MCF 10A (cell line): ENCODE measurements at regions of chr22 and their contacts with region 1.

Region 1: GRCh38 chr22:34950489-34950888 is 115.5 kb upstream of the ISX start:
- DNase-seq: no peak
- H3K4me3 Mint-ChIP-seq: no peak overlapping the region
- H3K27ac Mint-ChIP-seq: no peak overlapping the region
- H3K4me1 Mint-ChIP-seq: no peaks in the 10 kb centered on the region
- H3K27me3 Mint-ChIP-seq: no peaks in the 10 kb centered on the region
- CTCF ChIP-seq: no peak

Region 2: GRCh38 chr22:34475886-34476285 is 474.6 kb before region 1 on chr22:
- CTCF ChIA-PET with region 1: no interaction called
- POLR2A ChIA-PET with region 1: no interaction called
- intact Hi-C with region 1: no loop called
- DNase-seq: no peak
- H3K4me3 Mint-ChIP-seq: no peak overlapping the region
- H3K27ac Mint-ChIP-seq: no peak overlapping the region
- H3K4me1 Mint-ChIP-seq: no peaks in the 10 kb centered on the region
- H3K27me3 Mint-ChIP-seq: no peaks in the 10 kb centered on the region
- CTCF ChIP-seq: no peak

Region 3: DNA sequence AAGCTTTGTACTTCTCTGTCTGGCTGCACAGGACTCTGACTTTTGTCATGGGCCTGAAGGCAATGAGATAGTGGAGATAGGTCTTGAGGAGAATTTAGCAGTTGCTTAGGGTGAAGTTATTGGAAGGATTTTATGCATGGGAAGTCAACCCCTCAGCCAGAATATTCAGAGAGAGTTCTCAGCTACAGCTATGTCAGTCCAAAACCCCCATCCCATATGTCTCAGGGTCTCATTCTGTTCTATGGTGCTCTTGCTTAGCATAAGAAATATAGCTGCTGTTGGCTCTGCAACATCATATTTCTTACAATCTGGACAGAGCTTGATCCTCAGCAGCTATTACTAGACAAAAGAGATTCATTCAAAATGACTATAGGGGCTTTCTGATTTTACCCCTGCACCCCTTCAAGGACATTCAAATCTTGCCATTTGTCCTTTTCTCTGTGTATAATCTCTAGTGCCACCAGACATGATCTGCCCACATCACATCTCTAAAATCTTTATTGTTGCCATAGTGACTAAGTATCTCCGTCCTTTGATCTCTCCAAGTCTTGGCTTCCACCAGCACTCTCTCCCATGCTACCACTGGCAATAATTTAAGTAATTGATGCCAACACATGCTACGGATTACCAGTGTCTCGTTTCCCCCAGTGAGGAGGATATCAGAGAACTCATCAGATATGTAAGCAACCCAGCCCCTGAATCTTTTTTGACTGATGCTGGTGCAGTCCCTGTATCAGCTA is 211.7 kb before region 1 on chr22:
- CTCF ChIA-PET with region 1: no interaction called
- POLR2A ChIA-PET with region 1: no interaction called
- intact Hi-C with region 1: no loop called
- DNase-seq: no peak
- H3K4me3 Mint-ChIP-seq: no peak overlapping the region
- H3K27ac Mint-ChIP-seq: no peak overlapping the region
- H3K4me1 Mint-ChIP-seq: no peaks in the 10 kb centered on the region
- H3K27me3 Mint-ChIP-seq: no peaks in the 10 kb centered on the region
- CTCF ChIP-seq: no peak

Region 4: DNA sequence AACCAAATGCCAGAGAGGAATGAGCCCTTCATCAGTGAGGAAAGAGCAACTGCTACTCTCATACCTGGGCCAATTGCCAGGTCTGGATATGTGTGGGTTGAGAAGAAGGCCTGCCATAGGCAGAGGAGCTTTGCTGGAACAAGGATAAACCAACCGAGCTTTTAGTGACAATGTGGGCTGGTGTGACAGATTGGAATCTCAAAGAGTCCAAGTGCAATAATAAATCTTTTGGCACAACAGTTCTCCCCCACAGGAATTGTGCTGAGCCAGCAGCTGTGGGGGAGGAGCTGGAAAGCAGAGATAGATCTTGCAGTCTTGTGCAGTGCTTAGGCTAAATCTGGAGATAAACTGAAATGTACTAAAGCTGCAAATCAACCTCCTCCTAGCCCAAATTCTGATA is 36.0 kb after region 1 on chr22:
- CTCF ChIA-PET with region 1: no interaction called
- POLR2A ChIA-PET with region 1: no interaction called
- intact Hi-C with region 1: loop called (anchors 2 kb)
- DNase-seq: no peak
- H3K4me3 Mint-ChIP-seq: no peak overlapping the region
- H3K27ac Mint-ChIP-seq: no peak overlapping the region
- H3K4me1 Mint-ChIP-seq: no peaks in the 10 kb centered on the region
- H3K27me3 Mint-ChIP-seq: no peaks in the 10 kb centered on the region
- CTCF ChIP-seq: no peak